Stomach (tissue), 19 donors: ENCODE measurements at regions of chr21 and their contacts with region 1.

Region 1: GRCh38 chr21:31580866-31581276 is 78.6 kb upstream of the SOD1 start:
- DNase-seq: peak; percentile 75 to 87
- H3K4me3 ChIP-seq: no peak overlapping the region
- H3K27ac ChIP-seq: no peak overlapping the region
- H3K4me1 ChIP-seq: no peaks in the 10 kb centered on the region
- H3K27me3 ChIP-seq: no peaks in the 10 kb centered on the region
- CTCF ChIP-seq: peak in 5 of 7 experiments; percentile 70 to 79 (median 73)
- EP300 ChIP-seq: no peak
- POLR2A ChIP-seq: no peak

Region 2: DNA sequence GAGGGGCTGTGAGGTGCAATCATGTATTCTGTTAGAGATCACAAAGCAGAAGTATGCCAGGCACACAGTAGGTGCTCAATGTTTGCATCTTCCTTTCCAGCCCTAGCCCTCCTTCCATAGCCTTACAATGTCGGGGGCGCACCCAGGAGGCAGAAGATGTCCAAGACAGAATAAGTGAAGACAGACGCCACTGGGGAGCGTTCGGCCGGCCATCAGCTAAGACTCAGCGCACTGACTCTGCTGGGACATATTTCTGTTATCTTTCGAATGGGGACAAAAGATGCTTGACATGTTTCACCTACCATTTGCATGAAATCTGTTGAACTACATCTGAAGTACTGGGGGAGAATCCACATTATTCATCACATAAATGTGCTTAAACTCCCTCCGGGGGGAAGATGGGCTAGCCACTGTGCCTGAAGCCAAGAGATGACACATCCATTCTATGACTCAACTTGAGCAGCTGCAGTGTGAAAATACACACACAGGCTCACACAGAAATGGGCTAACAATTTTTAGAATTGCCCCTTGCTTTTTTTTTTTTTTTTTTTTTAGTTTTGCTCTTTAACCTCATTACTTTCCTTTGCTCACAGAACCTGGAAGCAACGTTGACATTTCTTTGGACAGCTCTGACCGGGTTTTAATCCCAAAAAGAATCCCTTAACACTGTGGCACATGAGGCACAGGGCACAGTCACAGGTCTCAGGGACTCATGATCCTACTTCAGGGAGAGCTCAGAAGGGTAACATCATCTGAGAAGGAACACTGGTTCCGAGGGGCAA is 244.7 kb before region 1 on chr21:
- intact Hi-C with region 1: no loop called
- DNase-seq: peak in 1 of 2 donors; percentile 60
- H3K4me3 ChIP-seq: no peak overlapping the region
- H3K27ac ChIP-seq: no peak overlapping the region
- H3K4me1 ChIP-seq: peaks cover 0 to 5% (median 0%) of the 10 kb centered on the region in 4 donors
- H3K27me3 ChIP-seq: peaks cover 0 to 7% (median 0%) of the 10 kb centered on the region in 3 donors
- CTCF ChIP-seq: no peak
- EP300 ChIP-seq: no peak
- POLR2A ChIP-seq: no peak

Region 3: DNA sequence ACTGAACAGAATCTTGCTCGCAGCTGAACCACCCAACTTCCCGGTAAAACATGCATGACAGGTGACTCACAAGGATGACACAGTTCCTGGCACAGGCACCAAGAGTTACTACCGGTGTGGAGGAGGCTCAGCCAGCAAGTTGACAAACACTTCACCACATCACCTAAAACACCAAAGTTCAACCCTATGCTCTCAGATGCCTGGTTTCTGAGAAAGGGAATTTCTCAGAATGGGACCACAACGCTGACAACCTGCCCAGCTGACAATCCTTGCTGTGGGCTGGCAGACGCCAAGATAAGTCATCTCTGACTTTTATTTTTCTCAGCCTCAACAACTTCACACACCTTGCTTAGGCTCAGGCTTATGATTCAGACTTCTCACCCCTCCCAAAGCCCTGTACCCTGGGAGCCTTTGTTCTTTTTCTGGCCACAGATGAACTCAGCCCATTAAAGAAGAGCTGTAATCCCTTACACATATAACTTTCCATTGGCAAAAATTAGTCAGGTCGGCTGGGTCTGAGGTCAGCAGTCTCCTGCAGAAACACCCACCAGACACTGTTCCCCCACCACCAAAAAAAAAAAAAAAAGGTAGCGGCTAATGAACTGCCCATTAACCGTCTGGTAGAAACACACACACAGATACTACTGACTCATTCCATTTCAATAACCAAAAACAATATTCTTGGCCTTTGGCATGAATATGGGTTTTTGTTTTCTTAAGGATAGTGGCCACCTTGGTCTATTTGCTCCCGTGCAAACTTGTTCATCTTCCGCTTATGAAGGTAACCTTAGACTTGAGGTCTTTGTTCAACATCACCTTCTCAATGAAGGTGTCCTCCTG is 226.0 kb before region 1 on chr21:
- intact Hi-C with region 1: loop called (anchors 10 kb)
- DNase-seq: peak; percentile 49 to 55
- H3K4me3 ChIP-seq: no peak overlapping the region
- H3K27ac ChIP-seq: peak overlapping the region in 2 of 5 donors; percentile 13 to 39
- H3K4me1 ChIP-seq: peaks cover 0 to 5% (median 0%) of the 10 kb centered on the region in 4 donors
- H3K27me3 ChIP-seq: no peaks in the 10 kb centered on the region
- CTCF ChIP-seq: no peak
- EP300 ChIP-seq: no peak
- POLR2A ChIP-seq: no peak